ENCODE measurements at regions of chr7 and their contacts with region 1.

Region 1: GRCh38 chr7:19708397-19709248 is at the start of gene POLR1F:
- DNase-seq: peak; percentile 68 to 96
- ATAC-seq: peak; percentile 97 to 99
- H3K4me3 ChIP-seq: peak within 1 kb of the TSS; percentile 89
- H3K27ac ChIP-seq: peak within 1 kb of the TSS; percentile 72 to 89
- H3K4me1 ChIP-seq: peaks cover 14% of the 10 kb centered on the region
- CTCF ChIP-seq: peak; percentile 75
- EP300 ChIP-seq: no peak
- POLR2A ChIP-seq: peak; percentile 94
- RAD21 ChIP-seq: peak; percentile 76 to 77
- polyA plus RNA-seq, gene POLR1F: 23.4 and 33.9 TPM in 2 replicates

Region 2: DNA sequence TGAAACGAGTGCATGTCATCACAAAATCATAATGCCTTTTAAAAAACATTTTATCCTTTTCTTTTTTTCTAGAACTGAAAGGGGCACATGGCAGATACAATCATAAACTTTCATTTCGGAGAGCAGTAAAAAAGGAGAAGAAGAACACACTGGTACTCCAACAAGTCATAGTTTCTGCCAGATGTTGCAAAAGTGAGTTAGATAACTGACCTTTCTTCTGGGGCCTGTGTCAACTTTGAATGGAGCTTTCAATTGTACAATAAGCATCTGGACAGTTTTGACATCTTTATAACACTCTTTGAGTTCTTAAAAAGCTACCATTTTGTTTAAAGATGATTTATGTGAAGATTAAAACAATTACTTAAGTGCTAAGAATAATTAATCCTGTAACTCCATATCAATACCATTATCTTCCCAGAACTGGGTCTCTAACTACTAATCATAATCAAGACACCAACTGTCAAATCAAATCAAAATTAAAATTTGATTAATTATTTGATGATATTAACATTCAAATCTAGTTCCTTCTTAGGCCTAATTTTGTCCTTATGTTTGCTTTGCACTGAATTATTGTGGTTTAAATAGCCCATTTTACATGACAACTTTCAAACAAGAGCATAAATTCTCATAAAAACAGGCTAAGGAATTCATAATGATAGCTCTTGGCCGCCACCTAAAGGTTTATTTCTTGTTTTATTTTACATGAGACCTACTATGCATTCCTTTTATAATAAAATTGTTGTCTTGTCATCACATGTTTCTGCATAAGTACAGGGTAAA is 602.5 kb after region 1 on chr7:
- CTCF ChIA-PET with region 1: interaction called, 28 read pairs
- POLR2A ChIA-PET with region 1: no interaction called
- DNase-seq: peak in 1 of 2 experiments; percentile 52
- ATAC-seq: peak in 1 of 2 experiments; percentile 47; a peak in 1 of 6 replicates
- H3K4me3 ChIP-seq: no peak overlapping the region
- H3K27ac ChIP-seq: no peak overlapping the region
- H3K4me1 ChIP-seq: peaks cover 8% of the 10 kb centered on the region; the same call in 1 of the 3 replicates
- CTCF ChIP-seq: peak; percentile 62
- EP300 ChIP-seq: no peak
- POLR2A ChIP-seq: no peak
- RAD21 ChIP-seq: peak; percentile 78 to 84